A549 (cell line): ENCODE measurements at regions of chr12 and their contacts with region 1.

Region 1: DNA sequence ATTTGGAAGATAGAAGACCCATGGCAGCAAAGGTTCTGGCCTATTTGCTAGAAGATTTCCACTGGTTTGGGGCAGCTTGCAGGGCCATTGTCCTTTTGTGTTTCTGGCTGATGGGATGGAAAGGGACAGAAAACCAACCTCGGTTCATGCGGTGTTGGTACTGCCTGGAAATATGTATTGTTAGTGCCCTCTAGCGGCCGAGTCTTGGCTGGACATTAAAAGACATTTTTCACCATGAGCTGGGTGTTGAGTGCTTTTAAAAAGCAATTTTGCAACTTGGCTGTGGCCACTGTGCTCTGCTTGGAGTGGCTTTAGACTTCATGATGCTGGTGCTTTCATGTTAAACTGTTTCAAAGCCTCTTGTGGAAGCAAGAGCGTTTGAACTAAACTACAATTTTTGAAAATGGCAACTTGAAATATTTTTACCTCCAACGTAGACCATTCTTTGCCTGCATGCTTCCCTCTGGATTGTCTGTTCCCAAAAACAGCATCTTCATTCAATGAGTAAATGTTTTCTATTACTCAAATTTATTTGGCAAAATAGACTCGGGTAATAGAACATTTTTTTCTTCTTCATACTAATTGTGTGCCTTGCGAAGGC is 102.7 kb upstream of the TBX5 start:
- DNase-seq: peak; percentile 76 to 80
- ATAC-seq: peak; percentile 73 to 89
- H3K4me3 ChIP-seq: no peak overlapping the region
- H3K27ac ChIP-seq: no peak overlapping the region
- H3K4me1 ChIP-seq: no peaks in the 10 kb centered on the region
- CTCF ChIP-seq: peak; percentile 71
- EP300 ChIP-seq: no peak
- POLR2A ChIP-seq: no peak
- RAD21 ChIP-seq: peak; percentile 72 to 84

Region 2: GRCh38 chr12:114483996-114484395 is 24.6 kb before region 1 on chr12:
- CTCF ChIA-PET with region 1: interaction called, 10 read pairs
- POLR2A ChIA-PET with region 1: no interaction called
- DNase-seq: no peak
- ATAC-seq: no peak
- H3K4me3 ChIP-seq: no peak overlapping the region
- H3K27ac ChIP-seq: no peak overlapping the region
- H3K4me1 ChIP-seq: 0 out of 3 replicates have a peak, but pooled peaks cover 6% of the 10 kb centered on the region
- CTCF ChIP-seq: no peak
- EP300 ChIP-seq: no peak
- POLR2A ChIP-seq: no peak
- RAD21 ChIP-seq: no peak

Region 3: GRCh38 chr12:114520236-114520635 is 11.6 kb after region 1 on chr12:
- CTCF ChIA-PET with region 1: interaction called, 11 read pairs
- POLR2A ChIA-PET with region 1: no interaction called
- DNase-seq: no peak
- ATAC-seq: no peak
- H3K4me3 ChIP-seq: no peak overlapping the region
- H3K27ac ChIP-seq: no peak overlapping the region
- H3K4me1 ChIP-seq: no peaks in the 10 kb centered on the region
- CTCF ChIP-seq: no peak
- EP300 ChIP-seq: no peak
- POLR2A ChIP-seq: no peak
- RAD21 ChIP-seq: no peak

Region 4: GRCh38 chr12:114697741-114698565 is 189.3 kb after region 1 on chr12:
- CTCF ChIA-PET with region 1: no interaction called
- POLR2A ChIA-PET with region 1: no interaction called
- DNase-seq: no peak
- ATAC-seq: no peak; a peak in 1 of 6 replicates
- H3K4me3 ChIP-seq: no peak overlapping the region
- H3K27ac ChIP-seq: no peak overlapping the region
- H3K4me1 ChIP-seq: peaks cover 2% of the 10 kb centered on the region; the same call in 1 of the 3 replicates
- CTCF ChIP-seq: no peak
- EP300 ChIP-seq: no peak
- POLR2A ChIP-seq: no peak
- RAD21 ChIP-seq: no peak